Left cardiac atrium (tissue), 4 donors: ENCODE measurements at regions of chr16 and their contacts with region 1.

Region 1: DNA sequence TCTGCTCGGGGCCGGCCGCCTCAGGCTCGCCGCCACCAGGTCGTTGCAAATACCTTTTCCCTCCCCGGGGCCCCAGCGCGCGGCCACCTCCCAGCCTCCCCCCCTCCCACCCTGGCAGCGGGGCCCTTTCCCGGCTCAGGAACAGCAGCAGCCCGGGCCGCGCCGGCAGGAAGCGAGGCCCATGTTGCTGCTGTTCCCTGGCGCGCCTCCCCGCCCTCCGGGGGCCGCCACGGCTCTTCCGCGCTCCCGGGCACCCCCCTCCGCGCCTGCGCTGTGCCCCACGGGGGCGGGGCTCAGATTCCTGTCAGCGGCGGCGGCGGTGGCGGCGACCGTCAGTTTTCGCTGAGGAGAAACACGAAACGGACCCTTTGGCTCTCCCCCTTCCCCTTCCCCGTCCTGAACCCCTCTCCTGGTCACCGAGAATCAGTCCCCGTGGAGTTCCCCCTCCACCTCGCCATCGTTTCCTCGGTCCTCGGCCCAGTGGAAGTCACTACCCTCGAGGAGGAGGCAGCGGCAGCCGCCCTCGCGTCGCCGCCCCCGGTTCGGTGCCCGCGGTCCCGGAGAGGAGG is at the start of gene NFAT5:
- DNase-seq: peak; percentile 88
- ATAC-seq: peak; percentile 91 to 92
- total RNA-seq, gene NFAT5: 19.7 to 23.6 TPM

Region 2: GRCh38 chr16:69396187-69397061 is 169.3 kb before region 1 on chr16:
- intact Hi-C with region 1: loop called (anchors 5 to 10 kb)
- DNase-seq: peak; percentile 62
- ATAC-seq: peak; percentile 45 to 53

Region 3: DNA sequence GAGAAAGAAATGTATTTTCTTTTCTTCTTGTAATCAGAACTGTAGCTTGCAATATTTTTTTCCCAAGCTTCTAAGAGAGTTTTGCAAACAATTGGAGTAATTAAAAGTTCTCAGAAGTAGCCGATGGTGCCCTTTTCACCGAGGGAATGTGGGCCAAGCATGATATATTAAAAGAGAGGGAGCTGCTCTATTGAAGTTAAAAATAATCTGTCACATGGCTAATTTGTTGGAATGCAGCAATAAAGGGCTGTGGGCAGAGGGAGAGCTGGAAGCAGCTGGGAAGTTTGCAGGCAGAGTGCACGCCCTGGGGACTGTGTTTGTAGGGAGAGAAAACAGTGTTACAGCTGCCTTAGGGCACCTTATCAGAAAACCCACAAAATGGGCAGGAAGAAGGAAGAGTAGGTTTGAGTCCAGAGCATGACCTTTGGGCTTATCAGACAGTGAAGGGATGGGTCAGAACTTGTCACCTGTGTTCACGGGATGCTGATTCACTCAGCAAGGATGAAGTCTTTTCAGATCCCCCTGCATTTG is 161.4 kb before region 1 on chr16:
- intact Hi-C with region 1: loop called (anchors 5 to 10 kb)
- DNase-seq: no peak
- ATAC-seq: peak; percentile 78 to 89

Region 4: DNA sequence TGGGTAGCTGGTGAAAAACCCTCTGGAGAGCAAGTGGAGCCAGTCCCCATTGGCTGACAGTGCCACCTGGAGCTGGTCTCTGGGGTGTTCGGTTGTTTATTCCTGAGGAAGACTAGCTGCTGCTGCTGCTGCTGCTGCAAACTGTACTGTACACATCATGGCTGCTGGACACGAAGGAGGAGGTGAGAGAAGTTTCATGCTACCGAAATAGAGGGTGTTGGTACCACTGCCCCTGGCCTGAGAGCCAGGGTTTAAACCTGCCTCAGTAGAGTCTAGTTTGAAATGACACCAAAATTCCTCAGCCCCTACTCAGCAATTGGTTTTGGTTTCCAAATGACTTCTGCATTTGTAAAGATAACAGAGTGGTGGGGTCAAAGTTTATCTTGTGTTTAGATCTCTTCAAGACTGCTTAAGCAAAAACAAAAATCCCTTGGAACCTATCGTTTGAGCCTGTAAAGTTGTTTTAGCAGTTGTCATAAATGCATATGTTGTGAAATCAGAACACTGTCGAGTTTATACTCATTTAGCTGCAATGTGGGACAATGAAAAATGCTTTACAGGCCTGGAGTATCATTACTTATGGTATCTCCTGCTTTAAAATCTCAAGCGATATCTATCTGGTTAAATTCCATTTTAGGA is 100.6 kb before region 1 on chr16:
- intact Hi-C with region 1: loop called in 1 of 2 experiments (anchors 10 kb)
- DNase-seq: no peak
- ATAC-seq: no peak

Region 5: DNA sequence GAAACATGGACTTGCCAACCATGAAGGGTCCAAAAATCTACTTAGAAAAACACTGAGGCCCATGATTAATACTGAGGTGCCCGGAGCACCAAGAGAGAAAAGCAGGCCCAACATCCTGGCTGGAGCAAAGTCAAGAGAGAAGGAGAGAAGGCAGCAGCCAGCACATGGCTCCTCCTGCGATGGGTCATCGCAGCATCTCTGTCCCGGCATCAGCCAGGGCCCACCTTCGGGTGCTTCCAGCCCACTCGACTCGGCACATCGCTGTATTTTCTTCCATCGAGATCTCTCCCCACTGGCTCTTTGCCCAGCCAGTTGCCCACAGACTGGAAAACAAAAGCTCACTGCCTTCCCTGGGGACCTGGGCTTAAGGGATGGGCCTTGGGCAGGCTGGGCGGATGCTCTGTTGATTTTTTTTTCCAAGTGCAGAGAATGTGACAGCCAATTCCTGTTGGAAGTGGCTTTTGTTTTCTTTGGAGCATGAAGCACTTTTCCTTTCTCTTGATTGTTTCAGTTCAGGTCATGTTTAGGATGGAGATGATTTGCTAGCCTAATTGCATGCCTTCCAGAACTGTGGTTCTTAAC is 83.3 kb before region 1 on chr16:
- intact Hi-C with region 1: loop called in 1 of 2 experiments (anchors 10 kb)
- DNase-seq: peak; percentile 87
- ATAC-seq: peak; percentile 80 to 85

Region 6: GRCh38 chr16:69494993-69495392 is 70.8 kb before region 1 on chr16:
- intact Hi-C with region 1: loop called in 1 of 2 experiments (anchors 10 kb)
- DNase-seq: no peak
- ATAC-seq: no peak

Region 7: GRCh38 chr16:69618307-69618706 is 52.6 kb after region 1 on chr16:
- intact Hi-C with region 1: loop called in 1 of 2 experiments (anchors 5 kb)
- DNase-seq: no peak
- ATAC-seq: peak; percentile 38 to 69

Region 8: DNA sequence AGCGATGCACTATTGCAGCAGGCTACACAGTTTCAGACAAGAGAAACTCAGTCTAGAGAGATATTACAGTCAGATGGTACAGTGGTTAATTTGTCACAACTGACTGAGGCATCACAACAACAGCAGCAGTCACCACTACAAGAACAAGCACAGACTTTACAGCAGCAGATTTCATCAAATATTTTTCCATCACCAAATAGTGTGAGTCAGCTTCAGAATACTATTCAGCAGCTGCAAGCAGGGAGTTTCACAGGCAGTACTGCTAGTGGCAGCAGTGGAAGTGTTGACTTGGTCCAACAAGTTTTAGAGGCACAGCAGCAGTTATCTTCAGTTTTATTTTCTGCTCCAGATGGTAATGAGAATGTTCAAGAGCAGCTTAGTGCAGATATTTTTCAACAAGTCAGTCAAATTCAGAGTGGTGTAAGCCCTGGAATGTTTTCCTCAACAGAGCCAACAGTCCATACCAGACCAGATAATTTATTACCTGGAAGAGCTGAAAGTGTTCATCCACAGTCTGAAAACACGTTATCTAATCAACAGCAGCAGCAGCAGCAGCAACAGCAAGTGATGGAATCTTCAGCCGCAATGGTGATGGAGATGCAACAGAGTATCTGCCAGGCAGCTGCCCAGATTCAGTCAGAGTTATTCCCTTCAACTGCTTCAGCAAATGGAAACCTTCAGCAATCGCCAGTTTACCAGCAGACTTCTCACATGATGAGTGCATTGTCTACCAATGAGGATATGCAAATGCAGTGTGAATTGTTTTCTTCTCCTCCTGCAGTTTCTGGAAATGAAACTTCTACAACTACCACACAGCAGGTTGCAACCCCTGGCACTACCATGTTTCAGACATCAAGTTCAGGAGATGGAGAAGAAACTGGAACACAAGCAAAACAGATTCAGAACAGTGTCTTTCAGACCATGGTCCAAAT is 126.5 kb after region 1 on chr16:
- intact Hi-C with region 1: no loop called
- DNase-seq: no peak
- ATAC-seq: peak; percentile 53 to 72